ENCODE measurements at regions of chr3 and their contacts with region 1.

Region 1: DNA sequence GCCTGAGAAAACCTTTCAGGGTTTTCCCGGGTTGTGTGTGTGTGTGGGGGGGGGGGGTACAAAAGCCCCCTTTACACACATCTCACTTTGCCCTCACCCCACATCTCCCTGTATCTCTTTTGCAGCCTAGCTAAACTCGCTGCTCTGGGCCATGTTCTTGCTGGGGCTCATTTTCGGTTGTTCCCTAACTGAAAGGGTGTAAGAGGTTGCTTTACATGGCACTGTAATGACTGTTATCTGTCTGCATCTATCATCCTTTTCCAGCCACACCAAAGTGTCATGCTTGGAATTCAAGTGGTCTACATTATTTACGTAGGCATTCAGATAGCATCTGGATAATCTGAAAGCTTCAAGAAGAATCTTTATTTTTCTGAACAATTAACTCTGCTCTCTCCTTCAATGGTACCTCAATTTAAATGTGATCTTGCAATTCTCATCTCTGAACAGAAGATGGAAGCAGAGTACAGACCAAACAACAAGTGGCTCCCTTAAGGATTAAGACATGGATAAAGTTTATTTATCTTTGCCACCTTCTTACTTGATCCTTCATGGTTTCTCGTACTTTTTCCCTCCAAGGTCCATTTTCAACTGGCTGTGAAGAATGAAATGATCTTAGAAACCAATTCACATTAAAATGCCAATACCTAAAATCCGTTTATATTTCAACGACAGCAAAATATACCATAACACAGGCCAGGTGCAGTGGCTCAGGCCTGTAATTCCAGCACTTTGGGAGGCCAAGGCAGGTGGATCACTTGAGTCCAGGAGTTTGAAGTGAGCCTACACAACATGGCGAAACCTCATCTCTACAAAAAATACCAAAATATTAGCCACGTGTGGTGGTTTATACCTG is 34.9 kb downstream of the DCLK3 start:
- DNase-seq: no peak
- ATAC-seq: peak; percentile 69
- H3K4me3 ChIP-seq: no peak overlapping the region
- H3K4me1 ChIP-seq: peaks cover 7% of the 10 kb centered on the region
- CTCF ChIP-seq: peak; percentile 23

Region 2: DNA sequence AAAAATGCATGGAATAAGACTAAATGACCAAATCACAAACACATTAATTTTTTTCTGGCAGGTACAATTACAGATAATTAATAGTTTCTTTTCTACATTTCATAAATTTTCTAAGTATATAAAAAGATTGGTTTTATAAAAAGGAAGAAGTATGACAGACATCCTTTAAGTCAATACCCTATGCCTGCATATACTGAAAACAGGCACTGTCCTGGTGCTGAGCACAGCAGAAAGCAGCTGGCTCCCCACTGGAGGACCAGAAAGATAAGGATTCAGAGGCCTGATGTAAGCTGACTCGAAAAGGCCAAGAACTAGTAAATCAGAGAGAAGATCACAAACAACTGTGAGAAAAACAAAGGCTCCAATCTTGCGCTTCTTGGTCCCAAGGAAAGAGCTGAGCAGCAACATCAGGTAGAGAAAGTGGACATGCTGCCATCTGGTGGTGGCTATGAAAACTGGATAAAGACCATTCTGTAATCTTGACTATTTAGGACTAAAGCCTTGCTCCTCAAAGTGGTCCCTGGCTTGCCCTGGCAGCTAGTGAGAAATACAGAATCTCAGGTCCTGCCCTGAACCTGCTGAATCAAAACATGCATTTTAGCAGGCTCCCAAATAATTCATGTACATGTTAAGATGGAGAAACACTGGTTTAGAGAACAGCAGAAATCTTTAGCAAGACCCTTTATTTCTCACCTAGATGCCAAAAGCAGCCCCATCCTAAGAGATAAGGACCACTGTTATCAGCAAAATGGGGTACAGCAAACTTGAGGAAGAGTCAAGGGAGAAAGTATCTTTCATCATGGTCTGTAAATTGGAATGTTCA is 139.4 kb after region 1 on chr3:
- intact Hi-C with region 1: loop called (anchors 5 to 10 kb)
- DNase-seq: peak in 1 of 3 donors; percentile 68
- ATAC-seq: peak; percentile 79
- H3K4me3 ChIP-seq: no peak overlapping the region
- H3K4me1 ChIP-seq: no peaks in the 10 kb centered on the region
- CTCF ChIP-seq: peak; percentile 36

Region 3: DNA sequence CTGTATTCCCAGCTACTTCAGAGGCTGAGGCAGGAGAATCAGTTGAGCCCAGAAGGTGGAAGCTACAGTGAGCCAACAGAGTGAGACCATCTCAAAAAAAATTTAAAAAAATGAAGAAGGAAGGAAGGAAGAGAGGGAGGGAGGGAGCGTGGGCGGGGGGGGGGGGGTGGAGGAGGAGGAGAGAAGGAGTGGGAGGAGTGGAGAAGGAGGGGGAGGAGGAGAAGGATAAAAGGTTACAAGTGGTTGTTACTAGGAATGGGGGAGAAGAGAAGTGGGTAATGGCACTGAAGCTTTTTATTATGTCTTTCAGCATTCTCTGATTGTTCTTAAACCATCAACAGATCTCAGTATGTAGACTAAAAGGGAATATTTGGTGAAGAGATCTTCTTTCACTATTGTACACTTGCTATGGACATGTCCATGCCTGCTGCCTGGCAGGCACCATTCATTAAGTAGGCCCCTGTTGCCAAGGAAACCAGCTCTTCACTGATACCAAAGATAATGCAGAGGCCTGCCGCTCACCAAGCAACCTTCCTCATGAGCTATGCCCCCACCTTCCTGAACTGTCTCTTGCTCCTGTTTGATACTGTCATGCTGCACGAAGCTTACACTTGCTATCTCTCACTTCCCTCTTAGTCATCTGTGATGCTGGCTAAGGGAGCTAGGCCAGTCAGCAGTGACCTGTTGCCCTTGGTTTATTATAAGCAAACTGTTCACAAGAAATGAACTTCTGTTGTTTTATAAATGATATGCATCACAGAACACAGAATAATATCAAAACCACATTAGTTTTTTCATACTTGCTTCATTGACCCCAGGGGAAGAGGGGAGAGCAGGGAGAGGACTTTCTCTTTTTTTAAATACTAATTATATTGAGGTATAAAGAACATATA is 240.4 kb after region 1 on chr3:
- intact Hi-C with region 1: loop called in 1 of 2 experiments (anchors 10 kb)
- DNase-seq: no peak
- ATAC-seq: peak; percentile 73
- H3K4me3 ChIP-seq: no peak overlapping the region
- H3K4me1 ChIP-seq: no peaks in the 10 kb centered on the region
- CTCF ChIP-seq: no peak

Region 4: GRCh38 chr3:37103103-37103808 is 373.8 kb after region 1 on chr3:
- intact Hi-C with region 1: no loop called
- DNase-seq: peak in 1 of 3 donors; percentile 21
- ATAC-seq: no peak
- H3K4me3 ChIP-seq: no peak overlapping the region
- H3K4me1 ChIP-seq: peaks cover 6% of the 10 kb centered on the region
- CTCF ChIP-seq: no peak

Measured in mucosa of descending colon (tissue), 3 donors.